Activated naive CD4-positive, alpha-beta T cell treated with anti-CD3 and anti-CD28 coated beads for 36 hours (primary cell): ENCODE measurements at regions of chr1 and their contacts with region 1.

Region 1: DNA sequence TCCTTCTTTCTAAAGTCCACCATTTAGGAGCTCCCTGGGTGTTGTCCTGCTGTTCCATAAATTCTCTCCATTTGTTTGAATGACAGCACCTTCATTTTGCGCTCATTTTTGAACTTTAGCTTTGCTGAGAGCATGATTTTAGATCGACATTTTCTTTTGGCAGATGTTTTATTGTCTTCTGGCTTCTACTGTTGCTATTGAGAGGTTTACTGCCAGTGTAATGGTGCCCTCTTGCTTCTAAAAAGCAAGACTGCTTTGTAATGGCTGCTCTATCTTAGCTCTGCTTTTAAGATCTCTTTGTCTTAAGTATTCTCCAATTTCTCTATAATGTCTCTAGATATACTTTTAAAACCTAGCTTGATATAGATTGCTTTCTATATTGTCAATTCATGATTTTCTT is 27.9 kb downstream of the THEM4 start:
- DNase-seq: no peak
- H3K4me3 Mint-ChIP-seq: no peak overlapping the region
- H3K27ac Mint-ChIP-seq: no peak overlapping the region
- H3K4me1 Mint-ChIP-seq: no peaks in the 10 kb centered on the region
- H3K27me3 Mint-ChIP-seq: no peaks in the 10 kb centered on the region

Region 2: GRCh38 chr1:151846062-151846568 is 35.3 kb before region 1 on chr1:
- CTCF ChIA-PET with region 1: interaction called, 3 read pairs
- intact Hi-C with region 1: loop called (anchors 5 kb)
- DNase-seq: peak; percentile 43
- H3K4me3 Mint-ChIP-seq: no peak overlapping the region
- H3K27ac Mint-ChIP-seq: no peak overlapping the region
- H3K4me1 Mint-ChIP-seq: peaks cover 26% of the 10 kb centered on the region
- H3K27me3 Mint-ChIP-seq: no peaks in the 10 kb centered on the region